ENCODE measurements at regions of chr6 and their contacts with region 1.

Region 1: GRCh38 chr6:30828027-30828960 is 56.0 kb upstream of the DDR1 start:
- DNase-seq: no peak
- H3K4me3 ChIP-seq: peak overlapping the region in 2 of 4 donors; percentile 23 to 39
- H3K27ac ChIP-seq: peak overlapping the region; percentile 79 to 85 (median 84)
- H3K4me1 ChIP-seq: peaks cover 22 to 48% (median 25%) of the 10 kb centered on the region in 3 donors
- H3K27me3 ChIP-seq: no peaks in the 10 kb centered on the region
- CTCF ChIP-seq: peak; percentile 94 to 99 (median 98)
- POLR2A ChIP-seq: no peak

Region 2: GRCh38 chr6:30877419-30878371 is 49.4 kb after region 1 on chr6:
- intact Hi-C with region 1: loop called (anchors 5 kb)
- DNase-seq: peak; percentile 39
- H3K4me3 ChIP-seq: peak overlapping the region; percentile 6 to 60 (median 31)
- H3K27ac ChIP-seq: peak overlapping the region; percentile 79 to 90 (median 88)
- H3K4me1 ChIP-seq: peaks cover 28 to 62% (median 41%) of the 10 kb centered on the region in 3 donors
- H3K27me3 ChIP-seq: no peaks in the 10 kb centered on the region
- CTCF ChIP-seq: peak; percentile 81 to 97 (median 94)
- POLR2A ChIP-seq: no peak

Region 3: GRCh38 chr6:31070711-31071197 is 242.5 kb after region 1 on chr6:
- intact Hi-C with region 1: no loop called
- DNase-seq: no peak
- H3K4me3 ChIP-seq: no peak overlapping the region
- H3K27ac ChIP-seq: peak overlapping the region in 3 of 4 donors; percentile 2 to 53 (median 27)
- H3K4me1 ChIP-seq: peaks cover 0 to 58% (median 10%) of the 10 kb centered on the region in 3 donors
- H3K27me3 ChIP-seq: no peaks in the 10 kb centered on the region
- CTCF ChIP-seq: peak in 5 of 6 experiments; percentile 22 to 76 (median 62)
- POLR2A ChIP-seq: no peak

Region 4: DNA sequence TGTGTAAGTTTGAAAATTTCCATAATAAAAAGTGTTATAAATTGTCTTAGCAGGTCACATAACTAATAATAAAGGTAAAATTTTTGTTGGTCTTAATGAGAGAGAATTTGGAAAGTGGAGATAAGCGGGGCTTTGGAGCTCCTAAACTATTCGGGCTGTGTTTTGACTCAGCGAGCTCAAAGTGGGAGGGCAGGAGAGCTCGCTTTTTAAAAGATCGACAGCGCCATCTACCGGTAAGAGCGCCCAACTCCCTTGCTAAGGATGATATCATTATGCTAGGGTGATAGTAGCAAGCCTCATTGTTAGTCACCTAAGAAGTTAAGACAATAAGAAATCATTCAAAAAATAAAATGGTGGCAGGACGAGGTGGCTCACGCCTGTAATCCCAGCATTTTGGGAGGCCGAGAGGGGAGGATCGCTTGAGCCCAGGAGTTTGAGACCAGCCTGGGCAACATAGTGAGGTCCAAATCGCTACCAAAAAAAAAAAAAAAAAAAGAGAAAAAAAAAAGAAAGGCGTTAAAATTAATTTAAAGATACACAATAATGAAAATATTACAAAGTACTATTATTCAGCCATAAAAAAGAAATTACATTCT is 259.3 kb after region 1 on chr6:
- intact Hi-C with region 1: loop called (anchors 10 kb)
- DNase-seq: no peak
- H3K4me3 ChIP-seq: no peak overlapping the region
- H3K27ac ChIP-seq: peak overlapping the region in 1 of 4 donors; percentile 4
- H3K4me1 ChIP-seq: peaks cover 0 to 31% (median 0%) of the 10 kb centered on the region in 3 donors
- H3K27me3 ChIP-seq: peaks cover 0 to 6% (median 0%) of the 10 kb centered on the region in 4 donors
- CTCF ChIP-seq: peak; percentile 33 to 91 (median 84)
- POLR2A ChIP-seq: no peak